ENCODE measurements at regions of chr6 and their contacts with region 1.

Region 1: GRCh38 chr6:43427406-43428111 is at the start of gene ABCC10:
- DNase-seq: peak; percentile 97
- H3K4me3 Mint-ChIP-seq: peak within 1 kb of the TSS; percentile 95
- H3K27ac Mint-ChIP-seq: peak within 1 kb of the TSS; percentile 96
- H3K4me1 Mint-ChIP-seq: peaks cover 17% of the 10 kb centered on the region
- H3K27me3 Mint-ChIP-seq: no peaks in the 10 kb centered on the region
- total RNA-seq, gene ABCC10: 27.2 to 31.9 TPM

Region 2: GRCh38 chr6:43280234-43280633 is 147.3 kb before region 1 on chr6:
- CTCF ChIA-PET with region 1: no interaction called
- POLR2A ChIA-PET with region 1: no interaction called
- intact Hi-C with region 1: no loop called
- DNase-seq: no peak
- H3K4me3 Mint-ChIP-seq: no peak overlapping the region
- H3K27ac Mint-ChIP-seq: no peak overlapping the region
- H3K4me1 Mint-ChIP-seq: peaks cover 9% of the 10 kb centered on the region
- H3K27me3 Mint-ChIP-seq: peaks cover 29% of the 10 kb centered on the region

Region 3: GRCh38 chr6:43318011-43318410 is 109.5 kb before region 1 on chr6:
- CTCF ChIA-PET with region 1: no interaction called
- POLR2A ChIA-PET with region 1: no interaction called
- intact Hi-C with region 1: no loop called
- DNase-seq: no peak
- H3K4me3 Mint-ChIP-seq: no peak overlapping the region
- H3K27ac Mint-ChIP-seq: no peak overlapping the region
- H3K4me1 Mint-ChIP-seq: no peaks in the 10 kb centered on the region
- H3K27me3 Mint-ChIP-seq: no peaks in the 10 kb centered on the region

Region 4: DNA sequence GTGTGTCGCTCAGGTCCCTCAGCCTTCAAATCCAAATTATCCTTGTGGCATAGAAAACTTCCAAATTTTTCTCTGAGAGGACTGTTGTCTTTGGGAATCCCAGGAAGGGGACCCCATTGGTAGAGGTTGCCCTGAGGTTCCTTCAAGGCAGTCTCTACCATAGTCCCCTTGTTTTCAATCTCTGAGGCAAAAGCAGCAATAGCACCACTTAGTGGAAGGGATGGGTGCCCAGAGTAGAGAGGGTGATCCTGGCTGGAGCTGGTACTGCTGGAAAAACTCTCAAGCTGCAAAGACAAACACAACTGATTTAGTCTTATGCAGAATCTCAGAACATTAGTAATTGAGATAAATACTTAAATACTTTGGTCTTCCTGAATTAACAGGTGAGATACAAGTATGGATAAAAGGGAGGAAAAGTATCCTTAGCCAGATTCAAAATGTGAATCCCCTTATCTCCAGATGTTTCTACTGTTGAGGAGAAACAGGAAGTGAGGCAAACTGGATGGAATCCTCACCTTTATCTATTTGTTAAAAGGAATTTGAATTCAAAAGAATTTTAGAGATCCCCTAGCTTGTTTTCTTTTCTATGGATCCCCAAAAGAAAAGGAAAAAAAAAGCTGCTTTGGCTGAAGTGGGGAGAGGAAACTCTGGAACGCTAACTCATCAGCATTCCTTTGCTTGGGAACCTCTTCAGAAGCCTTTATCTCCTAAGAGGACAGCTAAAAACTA is 71.5 kb before region 1 on chr6:
- CTCF ChIA-PET with region 1: no interaction called
- POLR2A ChIA-PET with region 1: no interaction called
- intact Hi-C with region 1: no loop called
- DNase-seq: no peak
- H3K4me3 Mint-ChIP-seq: no peak overlapping the region
- H3K27ac Mint-ChIP-seq: no peak overlapping the region
- H3K4me1 Mint-ChIP-seq: peaks cover 10% of the 10 kb centered on the region
- H3K27me3 Mint-ChIP-seq: no peaks in the 10 kb centered on the region

Region 5: GRCh38 chr6:43454696-43455530 is 27.4 kb after region 1 on chr6:
- CTCF ChIA-PET with region 1: interaction called, 4 read pairs
- POLR2A ChIA-PET with region 1: interaction called, 3 read pairs
- intact Hi-C with region 1: loop called (anchors 2 kb)
- DNase-seq: peak; percentile 36
- H3K4me3 Mint-ChIP-seq: peak overlapping the region; percentile 76
- H3K27ac Mint-ChIP-seq: no peak overlapping the region
- H3K4me1 Mint-ChIP-seq: peaks cover 8% of the 10 kb centered on the region
- H3K27me3 Mint-ChIP-seq: peaks cover 9% of the 10 kb centered on the region